ENCODE measurements at regions of chr2 and their contacts with region 1.

Region 1: GRCh38 chr2:175366815-175367214 is 185.3 kb upstream of the ATP5MC3 start:
- DNase-seq: peak; percentile 16
- CTCF ChIP-seq: peak; percentile 71

Region 2: DNA sequence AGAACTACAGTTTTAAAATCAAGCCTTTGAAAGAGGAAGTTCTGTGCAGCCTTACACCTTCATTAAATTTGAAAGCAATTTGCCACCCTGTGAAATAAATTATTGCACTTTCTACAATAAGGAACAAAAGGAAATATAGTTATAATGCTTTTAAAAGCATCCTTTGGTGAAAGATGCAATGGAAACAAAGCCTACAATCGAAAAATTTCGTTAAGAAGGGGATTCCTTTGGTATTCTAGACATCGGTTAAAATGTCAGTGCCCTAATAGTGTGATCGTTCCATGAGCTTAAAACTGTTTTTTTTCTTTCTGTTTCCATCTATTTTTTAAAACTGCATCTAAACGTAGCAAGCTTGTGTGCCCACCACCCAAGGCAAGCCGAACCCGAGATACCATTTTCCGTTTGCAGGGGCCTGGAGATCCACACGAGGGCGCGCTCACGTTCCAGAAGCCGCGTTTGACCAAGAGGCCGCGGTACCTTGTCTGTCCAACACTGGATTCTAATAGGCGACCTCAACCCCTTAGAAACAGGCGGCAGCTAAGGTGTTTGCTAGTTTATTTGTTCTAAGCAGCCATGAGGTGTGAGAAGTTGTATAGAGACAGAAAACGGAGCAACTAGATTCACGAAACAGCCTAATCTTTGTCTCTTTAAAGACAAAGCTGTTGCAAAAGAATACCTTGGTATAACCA is 744.3 kb after region 1 on chr2:
- in situ Hi-C with region 1: loop called (anchors 25 kb)
- DNase-seq: peak; percentile 74
- CTCF ChIP-seq: peak; percentile 59